Lower leg skin (tissue), 4 donors: ENCODE measurements at regions of chr2 and their contacts with region 1.

Region 1: DNA sequence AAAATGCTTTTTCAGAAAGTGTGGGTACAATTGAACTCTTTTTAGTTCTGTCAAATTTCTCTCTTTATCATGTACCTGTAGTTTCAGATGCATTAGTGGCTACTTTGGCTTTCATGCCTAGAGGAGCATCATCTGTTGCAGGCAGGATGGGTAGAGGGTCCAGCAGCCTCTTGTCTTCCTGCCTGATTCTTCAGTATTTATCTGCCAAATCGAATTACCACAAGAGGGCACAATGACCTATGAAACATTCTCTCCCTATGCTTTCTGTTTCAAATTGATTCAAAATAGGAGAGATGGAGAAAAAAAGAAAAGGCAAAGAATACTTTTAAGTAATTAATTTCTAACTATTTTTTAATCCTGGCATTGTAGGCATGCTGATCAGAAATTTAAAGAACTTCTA is 477.2 kb downstream of the TRIB2 start:
- DNase-seq: no peak
- H3K4me3 ChIP-seq: no peak overlapping the region
- CTCF ChIP-seq: no peak
- POLR2A ChIP-seq: no peak

Region 2: GRCh38 chr2:13114391-13114790 is 79.5 kb before region 1 on chr2:
- intact Hi-C with region 1: loop called (anchors 5 kb)
- DNase-seq: no peak
- H3K4me3 ChIP-seq: no peak overlapping the region
- CTCF ChIP-seq: no peak
- POLR2A ChIP-seq: no peak

Region 3: GRCh38 chr2:13230221-13230620 is 36.3 kb after region 1 on chr2:
- intact Hi-C with region 1: no loop called
- DNase-seq: no peak
- H3K4me3 ChIP-seq: no peak overlapping the region
- CTCF ChIP-seq: no peak
- POLR2A ChIP-seq: no peak

Region 4: GRCh38 chr2:13758412-13758811 is 564.5 kb after region 1 on chr2:
- intact Hi-C with region 1: no loop called
- DNase-seq: no peak
- H3K4me3 ChIP-seq: no peak overlapping the region
- CTCF ChIP-seq: no peak
- POLR2A ChIP-seq: no peak